Tibial artery (tissue), 4 donors: ENCODE measurements at regions of chr19 and their contacts with region 1.

Region 1: DNA sequence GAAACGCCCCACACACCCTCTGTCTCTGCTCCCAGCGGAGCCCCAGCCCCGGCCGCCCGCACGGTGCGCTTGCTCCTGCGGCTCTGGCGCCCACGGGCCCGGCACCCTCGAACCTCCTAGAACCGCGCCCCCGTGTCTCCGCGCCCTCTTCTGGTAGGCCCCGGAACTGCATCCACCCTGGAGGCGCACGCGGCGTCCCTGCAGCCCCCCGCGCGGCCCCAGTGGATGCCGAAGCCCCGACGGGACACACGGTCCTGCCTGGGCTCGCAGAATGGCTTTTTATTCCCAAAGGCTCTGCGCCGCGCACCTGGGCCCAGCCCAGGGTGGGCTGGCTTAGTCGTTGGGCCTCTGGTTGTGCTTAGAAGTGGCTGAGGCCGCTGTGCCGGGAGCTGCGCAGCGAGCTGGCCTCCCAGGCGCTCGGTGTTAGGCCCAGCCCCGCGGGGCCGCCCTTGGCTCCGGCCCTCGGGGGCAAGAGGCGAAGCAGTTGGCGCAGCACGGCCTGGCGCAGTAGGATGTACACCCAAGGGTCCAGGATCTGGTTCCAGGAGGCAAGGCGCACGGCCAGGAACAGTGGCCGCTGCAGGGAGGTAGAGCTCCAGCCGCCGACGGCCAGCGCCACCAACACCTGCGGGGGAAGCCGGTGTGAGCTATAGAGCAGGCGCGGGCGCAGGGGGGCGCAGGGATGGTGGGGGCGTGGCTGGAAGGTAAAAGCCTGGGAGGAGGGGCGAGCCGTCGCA is 2.8 kb downstream of the PTGER1 start:
- DNase-seq: peak; percentile 65 to 79
- H3K4me3 ChIP-seq: peak overlapping the region in 1 of 2 donors; percentile 3
- H3K27ac ChIP-seq: no peak overlapping the region
- H3K4me1 ChIP-seq: peaks cover 15 to 50% (median 34%) of the 10 kb centered on the region in 4 donors
- H3K27me3 ChIP-seq: peaks cover 0 to 36% of the 10 kb centered on the region in 2 donors
- CTCF ChIP-seq: peak; percentile 93 to 99

Region 2: DNA sequence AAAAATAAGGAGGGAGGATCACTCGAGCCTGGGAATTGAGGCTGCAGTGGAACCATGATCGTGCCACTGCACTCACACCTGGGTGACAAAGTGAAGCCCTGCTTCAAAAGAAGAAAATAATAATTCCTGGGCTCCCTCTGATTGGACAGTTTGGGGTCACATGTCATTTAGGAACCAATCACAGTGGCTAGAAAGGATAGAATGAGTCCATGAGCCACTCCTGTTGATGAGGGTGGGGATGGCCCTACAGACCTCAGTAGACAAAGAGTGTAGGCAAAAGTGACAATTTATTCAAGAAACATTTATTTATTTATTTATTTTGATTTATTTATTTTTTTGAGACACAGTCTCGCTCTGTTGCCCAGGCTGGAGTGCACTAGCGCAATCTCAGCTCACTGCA is 117.9 kb before region 1 on chr19:
- intact Hi-C with region 1: loop called (anchors 5 kb)
- DNase-seq: no peak
- H3K4me3 ChIP-seq: no peak overlapping the region
- H3K27ac ChIP-seq: no peak overlapping the region
- H3K4me1 ChIP-seq: no peaks in the 10 kb centered on the region
- H3K27me3 ChIP-seq: peaks cover 0 to 15% of the 10 kb centered on the region in 2 donors
- CTCF ChIP-seq: no peak

Region 3: DNA sequence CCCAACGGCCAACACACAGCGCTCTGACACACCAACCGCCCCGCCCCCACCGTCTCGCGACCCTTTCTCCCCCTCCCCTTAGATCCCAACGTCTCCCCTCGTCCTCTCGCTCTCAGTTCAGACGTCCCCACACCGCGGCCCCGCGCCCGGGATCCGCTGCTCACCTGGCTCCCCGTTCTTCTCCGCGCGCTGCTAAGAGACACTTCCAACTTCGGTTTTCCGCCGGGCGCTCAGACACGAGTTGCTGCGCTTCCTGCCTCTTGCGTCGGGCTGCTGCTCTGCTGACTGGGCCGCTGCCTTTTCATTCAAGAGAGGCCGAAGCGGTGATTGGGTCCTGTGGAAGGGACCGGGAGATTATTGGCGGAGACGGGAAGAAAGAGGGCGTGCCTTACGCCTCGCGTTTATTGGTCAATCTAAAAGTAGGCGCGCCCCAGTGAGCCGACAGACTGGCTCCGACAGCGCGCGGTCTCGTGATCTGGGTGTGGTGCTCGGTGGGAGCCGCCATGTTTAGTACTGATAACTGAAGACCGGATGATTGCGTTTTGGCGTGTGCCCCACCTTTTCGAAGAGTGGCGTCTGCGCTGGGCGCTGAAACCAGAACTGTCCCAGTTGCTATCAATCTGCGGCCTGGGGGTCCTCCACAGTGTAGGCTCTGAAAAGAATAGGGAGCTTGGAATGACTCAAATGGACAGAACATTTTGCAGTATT is 53.1 kb before region 1 on chr19 and contains the start of gene DDX39A:
- intact Hi-C with region 1: loop called (anchors 5 kb)
- DNase-seq: peak; percentile 99
- H3K4me3 ChIP-seq: peak within 1 kb of the TSS; percentile 81 to 88
- H3K27ac ChIP-seq: peak within 1 kb of the TSS; percentile 93
- H3K4me1 ChIP-seq: peaks cover 0 to 46% (median 24%) of the 10 kb centered on the region in 4 donors
- H3K27me3 ChIP-seq: no peaks in the 10 kb centered on the region
- CTCF ChIP-seq: peak in 1 of 2 experiments; percentile 27

Region 4: GRCh38 chr19:14434543-14435319 is 37.6 kb before region 1 on chr19:
- intact Hi-C with region 1: loop called (anchors 5 kb)
- DNase-seq: peak; percentile 81 to 88
- H3K4me3 ChIP-seq: peak overlapping the region; percentile 66 to 98
- H3K27ac ChIP-seq: peak overlapping the region; percentile 77 to 86
- H3K4me1 ChIP-seq: peaks cover 0 to 38% (median 19%) of the 10 kb centered on the region in 4 donors
- H3K27me3 ChIP-seq: no peaks in the 10 kb centered on the region
- CTCF ChIP-seq: no peak